Activated CD8-positive, alpha-beta memory T cell treated with anti-CD3 and anti-CD28 coated beads, Interleukin-2, amount 10 ng/mL, durations not matched to agents 7 days and 5 days (primary cell): ENCODE measurements at regions of chr16 and their contacts with region 1.

Region 1: DNA sequence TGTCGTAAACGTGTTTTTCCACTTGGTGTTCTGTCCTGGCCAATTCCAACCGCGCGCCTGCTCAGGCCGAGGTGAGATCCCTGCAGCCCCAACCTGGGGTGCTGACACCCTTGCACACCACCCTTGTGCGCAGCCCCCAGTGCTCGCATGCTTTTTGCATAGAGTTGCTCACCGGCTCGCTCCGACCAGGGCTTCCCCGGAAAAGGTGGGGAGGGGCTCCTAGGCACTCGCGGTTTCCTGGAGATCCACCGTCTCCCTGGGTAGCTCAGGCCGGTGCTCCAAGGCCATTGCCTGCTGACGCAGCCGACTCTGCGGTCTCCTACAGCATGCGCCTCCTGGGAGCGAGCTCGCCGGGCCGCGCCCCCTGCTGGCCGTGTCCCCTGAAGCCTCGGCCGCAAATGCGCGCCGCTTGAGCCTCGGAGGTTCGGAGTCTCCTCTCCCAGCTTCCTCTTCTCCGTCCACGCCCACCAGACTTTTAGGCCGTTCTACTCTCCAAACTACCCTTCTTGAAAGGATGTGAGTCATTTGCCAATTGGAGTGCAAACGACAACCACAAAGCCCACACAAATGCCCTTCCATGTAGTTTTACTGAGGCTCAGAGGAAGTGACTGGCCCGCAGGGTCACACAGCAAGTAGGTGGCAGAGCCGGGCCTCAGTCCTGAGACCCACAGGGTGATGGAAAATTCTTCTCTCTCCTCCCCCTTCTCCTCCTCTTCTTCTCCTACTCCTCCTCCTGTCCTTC is 7.2 kb upstream of the PDP2 start:
- DNase-seq: peak; percentile 99
- ATAC-seq: peak; percentile 89
- H3K4me3 Mint-ChIP-seq: peak overlapping the region; percentile 78
- H3K27ac Mint-ChIP-seq: peak overlapping the region; percentile 92
- H3K4me1 Mint-ChIP-seq: peaks cover 54% of the 10 kb centered on the region
- H3K27me3 Mint-ChIP-seq: no peaks in the 10 kb centered on the region

Region 2: GRCh38 chr16:66650707-66651473 is 222.2 kb before region 1 on chr16:
- CTCF ChIA-PET with region 1: interaction called, 15 read pairs
- DNase-seq: peak; percentile 91
- ATAC-seq: peak; percentile 100
- H3K4me3 Mint-ChIP-seq: peak overlapping the region; percentile 43
- H3K27ac Mint-ChIP-seq: peak overlapping the region; percentile 7
- H3K4me1 Mint-ChIP-seq: peaks cover 18% of the 10 kb centered on the region
- H3K27me3 Mint-ChIP-seq: no peaks in the 10 kb centered on the region

Region 3: GRCh38 chr16:66740010-66740409 is 133.1 kb before region 1 on chr16:
- CTCF ChIA-PET with region 1: interaction called, 14 read pairs
- DNase-seq: peak; percentile 57
- ATAC-seq: peak; percentile 57
- H3K4me3 Mint-ChIP-seq: no peak overlapping the region
- H3K27ac Mint-ChIP-seq: no peak overlapping the region
- H3K4me1 Mint-ChIP-seq: peaks cover 27% of the 10 kb centered on the region
- H3K27me3 Mint-ChIP-seq: no peaks in the 10 kb centered on the region

Region 4: GRCh38 chr16:66824006-66824405 is 49.1 kb before region 1 on chr16:
- CTCF ChIA-PET with region 1: interaction called, 160 read pairs
- DNase-seq: no peak
- ATAC-seq: no peak
- H3K4me3 Mint-ChIP-seq: no peak overlapping the region
- H3K27ac Mint-ChIP-seq: no peak overlapping the region
- H3K4me1 Mint-ChIP-seq: peaks cover 26% of the 10 kb centered on the region
- H3K27me3 Mint-ChIP-seq: no peaks in the 10 kb centered on the region

Region 5: GRCh38 chr16:66850115-66850815 is 22.8 kb before region 1 on chr16:
- CTCF ChIA-PET with region 1: interaction called, 46 read pairs
- DNase-seq: no peak
- ATAC-seq: no peak
- H3K4me3 Mint-ChIP-seq: no peak overlapping the region
- H3K27ac Mint-ChIP-seq: no peak overlapping the region
- H3K4me1 Mint-ChIP-seq: peaks cover 19% of the 10 kb centered on the region
- H3K27me3 Mint-ChIP-seq: peaks cover 13% of the 10 kb centered on the region

Region 6: DNA sequence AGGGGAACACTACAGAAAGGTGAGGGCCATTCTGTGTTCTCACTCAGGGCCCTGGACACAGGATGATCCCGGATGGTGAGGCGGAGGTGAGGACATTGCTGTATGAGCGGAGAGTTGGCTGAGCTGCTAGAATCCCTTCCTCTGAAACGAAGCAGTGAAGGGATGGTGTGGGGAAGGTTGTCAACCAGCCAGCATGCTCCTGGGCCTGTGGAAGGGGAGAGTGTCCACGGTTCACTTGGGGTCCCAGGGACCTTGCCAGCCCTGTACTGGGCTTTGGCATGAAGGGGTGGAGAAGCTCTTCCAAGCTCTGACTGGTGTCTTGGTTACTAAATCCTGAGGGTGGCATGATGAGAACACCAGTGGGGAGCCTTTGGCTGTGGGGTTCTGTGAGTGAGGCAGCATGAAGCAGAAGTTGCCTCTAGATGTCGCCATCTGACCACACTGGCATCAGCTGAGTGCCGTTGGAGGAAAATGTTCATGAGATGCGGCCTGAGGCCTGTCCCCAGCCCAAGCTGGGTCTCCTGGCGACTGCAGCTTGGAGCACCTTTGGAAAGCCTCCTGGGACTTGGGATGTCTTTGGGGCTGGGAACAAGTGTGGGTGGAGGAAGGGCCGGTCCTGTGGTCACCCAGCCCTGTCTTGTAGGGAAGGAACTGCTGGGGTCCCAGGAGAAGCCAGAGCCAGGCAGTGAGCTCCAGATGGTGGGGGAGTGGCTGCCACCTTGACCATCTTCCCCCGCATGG is 22.0 kb after region 1 on chr16:
- CTCF ChIA-PET with region 1: interaction called, 34 read pairs
- DNase-seq: peak; percentile 83
- ATAC-seq: peak; percentile 90
- H3K4me3 Mint-ChIP-seq: no peak overlapping the region
- H3K27ac Mint-ChIP-seq: peak overlapping the region; percentile 13
- H3K4me1 Mint-ChIP-seq: peaks cover 20% of the 10 kb centered on the region
- H3K27me3 Mint-ChIP-seq: no peaks in the 10 kb centered on the region